Heart right ventricle (tissue), 16 donors: ENCODE measurements at regions of chr6 and their contacts with region 1.

Region 1: DNA sequence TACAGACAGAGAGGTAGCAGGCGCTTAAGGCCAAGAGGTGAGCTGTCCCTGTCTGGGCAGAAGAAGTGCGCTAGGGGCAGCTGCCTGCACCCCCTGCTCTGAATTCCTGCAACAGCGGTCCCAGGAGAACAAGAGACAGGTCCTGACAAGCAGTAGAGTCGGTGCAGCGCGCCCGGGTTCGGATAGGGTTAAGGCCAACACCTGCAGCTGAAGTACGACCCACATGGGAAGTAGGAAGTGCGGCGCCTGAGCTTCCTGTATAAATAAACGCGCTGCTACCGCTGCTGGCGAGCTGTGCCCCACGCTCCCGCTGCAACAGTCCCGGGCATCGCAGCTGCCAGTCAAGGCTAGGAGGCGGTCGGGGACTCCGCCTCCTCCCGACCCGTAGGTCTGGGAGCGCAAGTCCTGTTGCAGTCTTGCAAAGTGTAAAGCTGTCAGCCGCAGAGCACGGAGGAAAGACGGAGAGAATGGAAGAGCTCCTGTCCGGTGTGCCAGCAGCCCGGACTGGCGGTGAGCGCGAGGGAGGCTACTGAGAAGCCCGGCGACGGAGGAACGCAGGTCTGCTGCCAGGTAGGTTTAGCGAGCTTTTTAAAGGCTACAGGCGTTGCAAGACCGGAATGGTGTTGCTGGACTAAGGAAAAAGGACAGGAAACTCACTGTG is at the start of gene RNF144B:
- DNase-seq: peak; percentile 76 to 83
- ATAC-seq: peak; percentile 89 to 99 (median 96)
- H3K4me3 ChIP-seq: peak within 1 kb of the TSS; percentile 54 to 88 (median 68)
- H3K27ac ChIP-seq: peak within 1 kb of the TSS; percentile 31 to 89 (median 82)
- H3K4me1 ChIP-seq: peaks cover 0 to 66% (median 30%) of the 10 kb centered on the region in 9 donors
- H3K27me3 ChIP-seq: no peaks in the 10 kb centered on the region
- CTCF ChIP-seq: no peak
- total RNA-seq, gene RNF144B: 4.6 to 25.5 (median 12.1) TPM

Region 2: GRCh38 chr6:18323935-18324705 is 63.1 kb before region 1 on chr6:
- intact Hi-C with region 1: loop called in 2 of 10 experiments (anchors 5 kb)
- DNase-seq: peak in 1 of 2 donors; percentile 9
- ATAC-seq: peak in 7 of 8 donors; percentile 42 to 79 (median 70)
- H3K4me3 ChIP-seq: no peak overlapping the region
- H3K27ac ChIP-seq: no peak overlapping the region
- H3K4me1 ChIP-seq: peaks cover 0 to 30% (median 0%) of the 10 kb centered on the region in 9 donors
- H3K27me3 ChIP-seq: no peaks in the 10 kb centered on the region
- CTCF ChIP-seq: peak; percentile 54 to 87 (median 79)

Region 3: DNA sequence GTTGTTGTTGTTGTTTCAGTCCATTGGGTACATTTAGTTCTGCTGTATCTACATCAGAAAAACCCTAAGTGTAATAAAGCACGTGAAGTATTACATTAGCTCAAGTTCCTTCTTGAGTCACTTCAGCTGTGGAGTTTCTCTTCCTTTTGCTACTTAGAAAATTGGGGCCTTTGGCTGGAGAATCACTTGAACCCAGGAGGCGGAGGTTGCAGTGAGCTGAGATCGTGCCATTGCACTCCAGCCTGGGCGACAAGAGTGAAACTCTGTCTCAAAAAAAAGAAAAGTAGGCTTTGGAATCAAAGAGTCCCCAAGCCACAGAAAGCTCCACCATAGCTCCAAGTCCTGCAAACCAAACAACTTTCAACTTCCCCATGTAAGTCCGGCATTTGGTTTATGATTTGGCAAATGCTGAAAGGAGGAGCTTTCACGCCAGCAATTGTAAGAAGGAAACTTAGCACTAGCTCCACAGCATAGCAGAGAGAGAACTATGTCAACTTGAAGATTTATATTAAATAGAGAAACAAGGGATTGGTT is 56.6 kb before region 1 on chr6:
- intact Hi-C with region 1: loop called in 3 of 10 experiments (anchors 5 kb)
- DNase-seq: no peak
- ATAC-seq: peak in 7 of 8 donors; percentile 37 to 76 (median 68)
- H3K4me3 ChIP-seq: peak overlapping the region in 1 of 10 donors; percentile 12
- H3K27ac ChIP-seq: peak overlapping the region in 3 of 10 donors; percentile 19 to 89 (median 31)
- H3K4me1 ChIP-seq: peaks cover 0 to 26% (median 0%) of the 10 kb centered on the region in 9 donors
- H3K27me3 ChIP-seq: no peaks in the 10 kb centered on the region
- CTCF ChIP-seq: no peak

Region 4: DNA sequence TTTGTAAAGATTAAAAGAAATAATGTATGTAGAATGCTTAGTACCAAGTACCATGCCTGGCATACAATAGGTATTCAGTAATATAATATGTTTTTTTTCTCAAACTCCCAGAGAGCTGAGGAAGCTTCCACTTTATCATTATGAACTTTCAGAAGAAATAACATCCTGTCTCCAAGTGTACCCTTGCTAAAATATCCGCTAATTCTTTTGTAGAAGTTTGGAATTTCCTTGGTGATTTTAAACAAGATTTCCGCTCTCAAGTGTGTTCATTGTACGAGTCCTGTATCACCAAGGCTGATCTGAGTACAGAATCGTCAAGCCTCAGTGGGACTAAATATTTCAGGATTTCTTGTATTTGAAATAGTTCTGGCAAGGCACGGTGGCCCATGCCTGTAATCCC is 16.2 kb before region 1 on chr6:
- intact Hi-C with region 1: loop called in 1 of 10 experiments (anchors 2 kb)
- DNase-seq: no peak
- ATAC-seq: peak; percentile 51 to 94 (median 82)
- H3K4me3 ChIP-seq: no peak overlapping the region
- H3K27ac ChIP-seq: peak overlapping the region; percentile 47 to 77 (median 63)
- H3K4me1 ChIP-seq: peaks cover 0 to 21% (median 7%) of the 10 kb centered on the region in 9 donors
- H3K27me3 ChIP-seq: no peaks in the 10 kb centered on the region
- CTCF ChIP-seq: no peak

Region 5: DNA sequence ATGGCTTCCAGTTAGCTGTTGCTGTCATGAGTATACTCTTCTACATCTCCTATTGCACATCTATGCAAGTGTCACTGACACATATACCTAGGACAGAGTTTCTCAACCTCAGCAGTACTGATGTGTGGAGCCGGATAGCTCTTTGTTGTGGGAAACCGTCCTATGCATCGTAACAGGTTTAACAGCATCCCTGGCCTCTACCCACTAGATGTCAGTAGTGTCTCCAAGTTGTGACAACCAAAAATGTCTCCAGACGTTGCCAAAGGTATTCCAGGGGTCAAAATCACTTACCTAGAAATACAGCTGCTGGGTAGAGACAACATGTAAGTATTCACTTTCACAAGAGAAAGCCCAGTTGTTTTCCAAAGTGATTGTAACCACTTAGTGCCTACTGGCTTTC is 637.5 kb after region 1 on chr6:
- intact Hi-C with region 1: no loop called
- DNase-seq: peak in 1 of 2 donors; percentile 25
- ATAC-seq: peak in 5 of 8 donors; percentile 49 to 69 (median 58)
- H3K4me3 ChIP-seq: no peak overlapping the region
- H3K27ac ChIP-seq: no peak overlapping the region
- H3K4me1 ChIP-seq: peaks cover 0 to 4% (median 0%) of the 10 kb centered on the region in 9 donors
- H3K27me3 ChIP-seq: no peaks in the 10 kb centered on the region
- CTCF ChIP-seq: peak; percentile 9 to 70 (median 56)